ENCODE measurements at regions of chr11 and their contacts with region 1.

Region 1: GRCh38 chr11:13261591-13262061 is 16.0 kb upstream of the BMAL1 start:
- DNase-seq: peak; percentile 94
- H3K4me3 Mint-ChIP-seq: peak overlapping the region; percentile 62
- H3K27ac Mint-ChIP-seq: peak overlapping the region; percentile 99
- H3K4me1 Mint-ChIP-seq: peaks cover 57% of the 10 kb centered on the region
- H3K27me3 Mint-ChIP-seq: no peaks in the 10 kb centered on the region
- CTCF ChIP-seq: no peak

Region 2: GRCh38 chr11:13216019-13216710 is 45.5 kb before region 1 on chr11:
- CTCF ChIA-PET with region 1: interaction called, 3 read pairs
- POLR2A ChIA-PET with region 1: interaction called, 18 read pairs
- intact Hi-C with region 1: loop called (anchors 1 kb)
- DNase-seq: peak; percentile 92
- H3K4me3 Mint-ChIP-seq: peak overlapping the region; percentile 32
- H3K27ac Mint-ChIP-seq: peak overlapping the region; percentile 85
- H3K4me1 Mint-ChIP-seq: peaks cover 26% of the 10 kb centered on the region
- H3K27me3 Mint-ChIP-seq: no peaks in the 10 kb centered on the region
- CTCF ChIP-seq: no peak

Region 3: DNA sequence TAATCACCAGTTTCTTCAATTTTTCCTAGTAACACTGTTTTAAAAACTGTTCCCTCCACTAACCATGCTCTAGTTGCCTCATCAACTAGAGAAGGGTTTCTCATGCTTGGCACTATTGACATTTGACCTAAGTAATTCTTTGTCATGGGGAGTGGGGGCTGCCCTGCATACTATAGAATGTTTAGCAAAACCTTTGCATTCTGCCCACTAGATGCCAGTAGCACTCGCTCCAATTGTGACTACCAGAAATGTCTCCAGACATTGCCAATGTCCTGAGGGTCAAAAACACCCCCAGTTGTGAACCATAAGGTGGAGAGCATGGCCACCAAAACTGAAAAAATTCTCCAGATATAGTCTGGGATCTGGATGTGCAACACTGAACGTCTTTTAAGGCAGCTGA is 11.6 kb before region 1 on chr11:
- CTCF ChIA-PET with region 1: interaction called, 8 read pairs
- POLR2A ChIA-PET with region 1: interaction called, 31 read pairs
- intact Hi-C with region 1: no loop called
- DNase-seq: peak; percentile 36
- H3K4me3 Mint-ChIP-seq: no peak overlapping the region
- H3K27ac Mint-ChIP-seq: no peak overlapping the region
- H3K4me1 Mint-ChIP-seq: no peaks in the 10 kb centered on the region
- H3K27me3 Mint-ChIP-seq: no peaks in the 10 kb centered on the region
- CTCF ChIP-seq: peak; percentile 52

Region 4: GRCh38 chr11:13316528-13316961 is 54.9 kb after region 1 on chr11:
- CTCF ChIA-PET with region 1: interaction called, 4 read pairs
- POLR2A ChIA-PET with region 1: interaction called, 14 read pairs
- intact Hi-C with region 1: no loop called
- DNase-seq: peak; percentile 85
- H3K4me3 Mint-ChIP-seq: no peak overlapping the region
- H3K27ac Mint-ChIP-seq: peak overlapping the region; percentile 87
- H3K4me1 Mint-ChIP-seq: peaks cover 64% of the 10 kb centered on the region
- H3K27me3 Mint-ChIP-seq: no peaks in the 10 kb centered on the region
- CTCF ChIP-seq: no peak

Region 5: DNA sequence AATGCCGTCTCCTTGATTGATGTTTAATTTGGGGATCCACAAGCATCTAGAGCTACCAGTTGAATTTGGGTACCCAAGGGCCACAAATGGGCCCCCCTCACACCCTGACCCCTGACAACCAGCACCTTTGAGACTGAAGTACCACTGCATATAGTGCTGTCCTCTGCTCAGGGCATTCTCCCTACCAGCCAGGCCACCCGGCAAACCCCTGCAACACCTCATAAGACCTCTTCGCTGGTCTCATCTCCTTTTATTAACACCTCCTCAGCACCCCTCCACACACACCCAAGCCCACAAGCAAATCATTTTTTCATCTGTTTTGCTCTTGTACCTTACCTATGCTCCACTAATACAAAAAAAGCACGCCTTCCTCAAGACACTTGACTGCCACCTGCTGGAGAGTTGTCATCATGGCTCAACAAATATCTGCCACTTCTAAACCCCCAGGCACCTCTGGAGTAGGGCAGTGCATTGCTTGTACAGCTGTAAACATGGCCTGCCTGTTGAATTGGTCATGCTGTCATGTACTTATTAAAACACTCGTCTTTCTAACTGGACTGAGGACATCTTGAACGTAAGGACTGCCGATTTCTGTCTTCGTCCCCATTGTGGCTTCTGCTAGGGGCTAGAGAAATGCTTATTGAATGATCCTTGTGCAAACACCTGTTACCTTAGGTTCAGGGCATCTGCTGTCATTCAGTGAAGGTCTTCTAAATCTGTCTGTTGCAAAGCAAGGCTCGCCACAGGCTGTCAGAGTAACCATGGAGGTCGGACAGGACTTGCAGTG is 82.5 kb after region 1 on chr11:
- CTCF ChIA-PET with region 1: interaction called, 242 read pairs
- POLR2A ChIA-PET with region 1: interaction called, 204 read pairs
- intact Hi-C with region 1: no loop called
- DNase-seq: peak; percentile 86
- H3K4me3 Mint-ChIP-seq: no peak overlapping the region
- H3K27ac Mint-ChIP-seq: no peak overlapping the region
- H3K4me1 Mint-ChIP-seq: peaks cover 30% of the 10 kb centered on the region
- H3K27me3 Mint-ChIP-seq: no peaks in the 10 kb centered on the region
- CTCF ChIP-seq: peak; percentile 70

Region 6: GRCh38 chr11:13376838-13377237 is 115.2 kb after region 1 on chr11:
- CTCF ChIA-PET with region 1: no interaction called
- POLR2A ChIA-PET with region 1: no interaction called
- intact Hi-C with region 1: no loop called
- DNase-seq: no peak
- H3K4me3 Mint-ChIP-seq: no peak overlapping the region
- H3K27ac Mint-ChIP-seq: no peak overlapping the region
- H3K4me1 Mint-ChIP-seq: no peaks in the 10 kb centered on the region
- H3K27me3 Mint-ChIP-seq: no peaks in the 10 kb centered on the region
- CTCF ChIP-seq: no peak

Measured in MCF 10A (cell line).